PC-9 (cell line): ENCODE measurements at regions of chr1 and their contacts with region 1.

Region 1: DNA sequence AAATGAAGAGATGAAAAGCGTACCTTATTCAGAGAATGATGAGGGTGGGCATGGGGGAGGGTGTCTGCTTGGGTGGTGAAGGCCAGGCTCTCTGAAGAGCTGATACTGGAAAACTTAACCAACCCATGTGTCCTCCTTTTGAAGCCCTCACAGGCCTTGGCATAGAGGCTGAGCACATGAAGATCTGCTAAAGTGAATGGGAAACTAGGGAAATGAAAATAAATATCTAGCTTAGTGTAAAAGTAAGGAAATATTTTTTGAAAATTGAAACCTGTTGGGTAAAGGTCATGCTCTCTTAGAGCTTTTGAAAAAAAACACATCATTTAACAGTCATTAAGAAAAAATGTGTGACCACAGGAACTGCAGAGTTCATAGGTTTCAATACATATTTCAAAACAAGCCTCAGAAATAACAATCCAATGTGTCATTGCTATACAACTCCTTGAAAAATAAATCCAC is 40.5 kb upstream of the RALGPS2 start:
- DNase-seq: peak; percentile 16 to 97
- H3K4me3 ChIP-seq: peak overlapping the region; percentile 21; the same call in 1 of the 2 replicates
- H3K27ac ChIP-seq: peak overlapping the region; percentile 96
- H3K4me1 ChIP-seq: peaks cover 49% of the 10 kb centered on the region
- H3K27me3 ChIP-seq: no peaks in the 10 kb centered on the region
- CTCF ChIP-seq: no peak

Region 2: DNA sequence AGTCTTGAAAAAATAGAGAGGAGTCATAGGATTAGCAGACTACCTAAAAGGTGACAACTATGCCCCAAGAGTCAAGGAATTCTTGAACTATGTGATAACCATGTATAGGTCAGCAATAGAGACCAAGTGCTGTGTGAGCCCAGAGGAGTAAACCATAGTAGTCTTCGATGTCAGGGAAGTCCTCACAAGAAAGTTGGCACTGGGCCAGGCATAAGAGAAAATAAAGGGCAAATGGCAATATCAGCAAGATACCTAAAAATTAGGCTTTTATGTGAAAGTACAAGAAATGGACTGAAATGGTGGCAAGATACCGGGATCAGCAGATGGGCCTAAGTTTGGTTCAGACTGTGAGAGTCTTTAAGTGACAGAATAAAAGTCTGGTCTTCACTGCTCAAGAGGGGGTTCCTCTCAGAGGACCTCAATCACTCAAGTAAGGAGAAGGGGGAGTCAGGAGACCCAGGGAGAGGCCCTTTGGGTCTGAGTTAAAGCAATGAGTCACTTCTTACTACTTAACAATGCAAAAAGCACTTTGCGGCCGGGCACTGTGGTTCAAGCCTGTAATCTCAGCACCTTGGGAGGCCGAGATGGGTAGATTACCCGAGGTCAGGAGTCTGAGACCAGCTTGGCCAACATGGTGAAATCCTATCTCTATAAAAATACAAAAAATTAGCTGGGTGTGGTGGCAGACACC is 76.7 kb before region 1 on chr1:
- CTCF ChIA-PET with region 1: no interaction called
- POLR2A ChIA-PET with region 1: no interaction called
- intact Hi-C with region 1: loop called (anchors 2 kb)
- DNase-seq: no peak
- H3K4me3 ChIP-seq: no peak overlapping the region
- H3K27ac ChIP-seq: peak overlapping the region; percentile 92
- H3K4me1 ChIP-seq: peaks cover 44% of the 10 kb centered on the region
- H3K27me3 ChIP-seq: no peaks in the 10 kb centered on the region
- CTCF ChIP-seq: no peak

Region 3: GRCh38 chr1:178774263-178774662 is 89.7 kb after region 1 on chr1:
- CTCF ChIA-PET with region 1: interaction called, 21 read pairs
- POLR2A ChIA-PET with region 1: interaction called, 3 read pairs
- intact Hi-C with region 1: no loop called
- DNase-seq: no peak
- H3K4me3 ChIP-seq: no peak overlapping the region
- H3K27ac ChIP-seq: no peak overlapping the region
- H3K4me1 ChIP-seq: no peaks in the 10 kb centered on the region
- H3K27me3 ChIP-seq: no peaks in the 10 kb centered on the region
- CTCF ChIP-seq: peak; percentile 73

Region 4: GRCh38 chr1:180415985-180416633 is 1731.5 kb after region 1 on chr1:
- CTCF ChIA-PET with region 1: interaction called, 32 read pairs
- POLR2A ChIA-PET with region 1: no interaction called
- intact Hi-C with region 1: no loop called
- DNase-seq: no peak
- H3K4me3 ChIP-seq: no peak overlapping the region
- H3K27ac ChIP-seq: no peak overlapping the region
- H3K4me1 ChIP-seq: no peaks in the 10 kb centered on the region
- H3K27me3 ChIP-seq: no peaks in the 10 kb centered on the region
- CTCF ChIP-seq: peak; percentile 82